IMR-90 (cell line): ENCODE measurements at regions of chr13 and their contacts with region 1.

Region 1: GRCh38 chr13:37775871-37776270 is 93.7 kb downstream of the TRPC4 start:
- DNase-seq: peak; percentile 60
- ATAC-seq: no peak
- H3K4me3 ChIP-seq: no peak overlapping the region
- H3K27ac ChIP-seq: no peak overlapping the region
- H3K4me1 ChIP-seq: no peaks in the 10 kb centered on the region
- H3K27me3 ChIP-seq: no peaks in the 10 kb centered on the region
- CTCF ChIP-seq: no peak
- POLR2A ChIP-seq: no peak
- RAD21 ChIP-seq: no peak

Region 2: DNA sequence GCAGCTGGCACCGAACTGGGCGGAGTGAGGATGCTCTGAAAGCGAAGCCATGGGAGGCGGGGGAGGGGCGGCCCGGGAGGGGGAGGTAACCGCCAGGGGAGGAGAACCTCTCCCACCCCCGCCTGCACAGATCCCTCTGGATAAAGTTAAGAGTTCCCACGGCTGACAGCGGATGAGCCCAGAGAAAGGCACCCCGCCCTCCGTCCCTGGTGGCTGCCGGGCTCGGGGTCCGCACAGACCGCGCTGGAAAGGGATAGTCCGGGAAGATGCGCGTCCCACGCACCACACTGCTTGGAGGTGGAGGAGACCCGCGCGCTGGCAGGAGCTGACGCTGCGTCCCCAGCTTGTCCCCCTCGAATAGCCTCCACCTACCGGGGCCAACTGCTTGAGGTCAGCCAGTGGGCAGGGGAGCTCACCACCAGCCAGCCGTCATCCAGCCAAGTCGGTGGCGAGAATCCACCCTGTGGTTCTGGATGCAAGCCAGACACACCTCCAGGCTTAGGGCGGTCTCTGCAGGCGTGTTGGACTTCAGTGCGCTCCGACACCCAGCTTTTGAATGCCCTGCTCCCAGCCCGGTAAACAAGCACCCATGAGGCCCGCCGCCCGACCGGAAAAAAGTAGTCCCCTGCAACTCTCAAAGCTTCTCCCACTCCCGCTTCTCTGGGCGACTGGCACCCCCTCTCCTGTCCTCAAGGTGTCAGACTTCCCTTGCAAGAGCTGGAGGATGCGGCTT is 94.1 kb after region 1 on chr13 and contains the start of gene TRPC4:
- CTCF ChIA-PET with region 1: no interaction called
- POLR2A ChIA-PET with region 1: no interaction called
- dilution Hi-C with region 1: no loop called
- in situ Hi-C with region 1: no loop called
- intact Hi-C with region 1: loop called (anchors 5 kb)
- DNase-seq: peak; percentile 59
- ATAC-seq: peak; percentile 55
- H3K4me3 ChIP-seq: peak within 1 kb of the TSS; percentile 55
- H3K27ac ChIP-seq: peak within 1 kb of the TSS; percentile 21; the same call in 1 of the 2 replicates
- H3K4me1 ChIP-seq: peaks cover 4% of the 10 kb centered on the region
- H3K27me3 ChIP-seq: no peaks in the 10 kb centered on the region
- CTCF ChIP-seq: peak; percentile 47
- POLR2A ChIP-seq: no peak
- RAD21 ChIP-seq: peak; percentile 56
- total RNA-seq, gene TRPC4: 5.2 and 5.3 TPM in 2 replicates